Endothelial cell of umbilical vein (primary cell): ENCODE measurements at regions of chr3 and their contacts with region 1.

Region 1: GRCh38 chr3:71130471-71131374 is 452.8 kb downstream of the FOXP1 start:
- DNase-seq: peak; percentile 84
- H3K4me3 ChIP-seq: peak overlapping the region; percentile 24 to 91 (median 87)
- H3K27ac ChIP-seq: peak overlapping the region; percentile 93
- H3K4me1 ChIP-seq: peaks cover 24% of the 10 kb centered on the region
- H3K27me3 ChIP-seq: no peaks in the 10 kb centered on the region
- CTCF ChIP-seq: no peak
- POLR2A ChIP-seq: no peak

Region 2: DNA sequence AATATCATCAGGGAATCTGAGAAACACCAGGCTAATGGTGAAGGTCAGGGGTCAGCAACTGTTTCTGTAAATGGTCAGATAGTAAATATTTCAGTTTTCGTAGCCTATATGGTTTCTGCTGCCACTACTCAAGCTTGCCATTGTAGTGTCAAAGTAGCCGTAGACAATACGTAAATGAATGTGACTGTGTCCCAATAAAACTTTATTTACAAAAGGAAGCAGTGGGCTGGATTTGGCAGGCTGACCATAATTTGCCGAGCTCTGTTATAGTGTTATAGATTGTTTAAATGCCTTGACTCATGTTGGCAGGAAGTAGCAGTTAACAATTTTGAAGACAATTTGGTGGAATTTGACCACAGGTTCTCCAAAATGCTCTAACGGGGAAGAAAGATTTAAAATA is 95.4 kb before region 1 on chr3:
- CTCF ChIA-PET with region 1: no interaction called
- POLR2A ChIA-PET with region 1: no interaction called
- dilution Hi-C with region 1: no loop called
- intact Hi-C with region 1: no loop called
- DNase-seq: peak; percentile 96
- H3K4me3 ChIP-seq: no peak overlapping the region
- H3K27ac ChIP-seq: peak overlapping the region; percentile 73
- H3K4me1 ChIP-seq: peaks cover 27% of the 10 kb centered on the region
- H3K27me3 ChIP-seq: no peaks in the 10 kb centered on the region
- CTCF ChIP-seq: no peak
- POLR2A ChIP-seq: no peak

Region 3: DNA sequence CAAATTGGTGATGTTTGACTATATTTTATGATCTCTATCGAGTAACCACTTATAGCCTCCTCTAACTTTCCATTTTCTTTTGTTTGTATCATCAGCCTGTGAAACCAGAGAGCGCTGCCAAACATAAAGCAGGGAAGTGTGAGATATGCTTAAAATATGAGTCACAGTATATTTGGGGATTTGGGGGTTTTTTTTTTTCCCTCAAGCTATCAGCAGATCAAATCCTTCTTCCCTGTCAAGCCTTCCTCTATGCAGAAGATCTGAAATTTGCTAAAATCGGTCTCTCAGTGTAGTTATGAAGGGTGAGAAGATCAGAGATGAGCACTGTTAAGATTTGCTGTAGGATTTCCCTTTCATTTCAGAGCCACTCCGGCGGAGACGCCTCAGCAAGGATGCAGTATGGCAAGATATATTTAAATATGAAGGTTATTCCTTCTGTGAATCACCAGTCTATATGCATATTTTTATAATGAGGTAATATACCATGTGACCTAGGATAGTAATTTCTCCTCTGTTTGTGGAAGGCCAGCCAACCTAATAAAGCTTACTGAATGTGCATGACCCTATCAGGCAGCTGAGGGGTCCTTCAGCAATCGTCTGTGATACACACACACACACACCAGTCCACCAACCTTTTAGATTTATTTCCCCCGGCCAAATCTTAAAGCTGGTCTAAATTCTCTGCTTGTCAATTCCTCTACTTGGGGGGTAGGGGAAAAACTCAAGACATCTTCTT is 21.3 kb before region 1 on chr3:
- CTCF ChIA-PET with region 1: interaction called, 7 read pairs
- POLR2A ChIA-PET with region 1: interaction called, 3 read pairs
- dilution Hi-C with region 1: no loop called
- intact Hi-C with region 1: loop called (anchors 1 kb)
- DNase-seq: peak; percentile 86
- H3K4me3 ChIP-seq: peak overlapping the region in 2 of 3 experiments; percentile 28 to 56
- H3K27ac ChIP-seq: peak overlapping the region; percentile 97
- H3K4me1 ChIP-seq: peaks cover 63% of the 10 kb centered on the region
- H3K27me3 ChIP-seq: no peaks in the 10 kb centered on the region
- CTCF ChIP-seq: no peak
- POLR2A ChIP-seq: no peak

Region 4: DNA sequence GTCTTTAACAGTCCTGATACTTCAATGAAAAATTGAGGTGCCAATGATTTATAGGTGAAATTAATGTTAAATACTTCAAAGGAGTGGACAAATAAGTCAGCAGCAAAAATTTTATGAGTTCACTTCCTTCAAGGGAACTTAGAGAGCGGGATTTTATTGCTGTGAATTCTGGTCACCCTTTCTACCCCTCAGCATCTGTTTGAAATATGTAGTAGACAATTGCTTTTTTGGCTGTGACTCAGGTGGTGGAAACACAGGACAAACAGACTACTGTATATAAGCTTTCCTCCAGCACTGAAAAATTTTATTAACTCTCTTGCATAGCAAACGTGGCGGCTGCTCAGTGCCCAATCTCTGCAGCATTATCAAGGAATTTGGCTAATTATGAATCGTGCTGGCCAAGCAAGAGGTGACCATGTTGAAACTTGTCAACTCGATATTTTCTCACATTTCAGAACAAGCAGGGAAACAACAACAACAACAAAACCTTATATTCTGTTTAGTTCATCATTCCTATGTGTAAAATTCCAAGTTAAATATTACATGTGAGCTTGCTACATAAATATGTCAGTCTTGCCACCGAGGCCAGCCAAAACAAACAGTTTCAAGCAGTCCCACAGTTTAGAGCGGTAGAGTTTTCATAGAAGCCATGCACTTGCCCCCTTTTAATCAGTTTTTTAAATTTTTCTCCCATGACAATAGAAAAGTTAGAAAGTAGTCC is 32.6 kb after region 1 on chr3:
- CTCF ChIA-PET with region 1: interaction called, 7 read pairs
- POLR2A ChIA-PET with region 1: no interaction called
- dilution Hi-C with region 1: no loop called
- intact Hi-C with region 1: loop called (anchors 2 kb)
- DNase-seq: peak; percentile 78
- H3K4me3 ChIP-seq: no peak overlapping the region
- H3K27ac ChIP-seq: no peak overlapping the region
- H3K4me1 ChIP-seq: no peaks in the 10 kb centered on the region
- H3K27me3 ChIP-seq: no peaks in the 10 kb centered on the region
- CTCF ChIP-seq: no peak
- POLR2A ChIP-seq: no peak

Region 5: GRCh38 chr3:71247221-71247976 is 116.7 kb after region 1 on chr3:
- CTCF ChIA-PET with region 1: no interaction called
- POLR2A ChIA-PET with region 1: interaction called, 4 read pairs
- dilution Hi-C with region 1: no loop called
- intact Hi-C with region 1: loop called (anchors 2 kb)
- DNase-seq: no peak
- H3K4me3 ChIP-seq: no peak overlapping the region
- H3K27ac ChIP-seq: no peak overlapping the region
- H3K4me1 ChIP-seq: peaks cover 34% of the 10 kb centered on the region
- H3K27me3 ChIP-seq: no peaks in the 10 kb centered on the region
- CTCF ChIP-seq: no peak
- POLR2A ChIP-seq: no peak